PC-9 (cell line): ENCODE measurements at regions of chr22 and their contacts with region 1.

Region 1: GRCh38 chr22:19479357-19480172 is at the start of gene CDC45:
- DNase-seq: peak; percentile 89 to 91
- H3K4me3 ChIP-seq: peak within 1 kb of the TSS; percentile 75
- H3K27ac ChIP-seq: peak within 1 kb of the TSS; percentile 92
- H3K4me1 ChIP-seq: peaks cover 15% of the 10 kb centered on the region
- H3K27me3 ChIP-seq: no peaks in the 10 kb centered on the region
- CTCF ChIP-seq: no peak
- total RNA-seq, gene CDC45: 27.5 and 29.1 TPM in 2 replicates

Region 2: DNA sequence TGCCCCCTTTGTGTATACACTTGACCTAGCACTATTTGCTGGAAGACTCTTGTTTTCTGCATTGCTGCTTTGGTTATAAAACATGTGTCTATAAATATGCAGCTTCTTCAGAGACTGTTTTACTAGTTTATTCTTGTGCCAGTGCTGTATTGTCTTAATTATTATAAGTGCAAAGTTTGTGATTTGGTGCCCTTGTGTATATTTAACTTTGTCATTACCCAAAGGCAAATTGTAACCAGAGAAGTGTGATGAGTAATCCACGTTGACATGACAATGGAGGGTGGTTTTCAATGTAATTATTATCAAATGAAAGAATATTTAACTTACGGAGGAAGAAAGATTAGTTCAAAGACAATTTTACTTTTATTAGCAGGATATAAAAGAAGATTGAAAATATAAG is 468.5 kb before region 1 on chr22:
- CTCF ChIA-PET with region 1: no interaction called
- POLR2A ChIA-PET with region 1: no interaction called
- intact Hi-C with region 1: no loop called
- DNase-seq: no peak
- H3K4me3 ChIP-seq: no peak overlapping the region
- H3K27ac ChIP-seq: no peak overlapping the region
- H3K4me1 ChIP-seq: peaks cover 9% of the 10 kb centered on the region
- H3K27me3 ChIP-seq: no peaks in the 10 kb centered on the region; the same call in 1 of the 2 replicates
- CTCF ChIP-seq: no peak

Region 3: DNA sequence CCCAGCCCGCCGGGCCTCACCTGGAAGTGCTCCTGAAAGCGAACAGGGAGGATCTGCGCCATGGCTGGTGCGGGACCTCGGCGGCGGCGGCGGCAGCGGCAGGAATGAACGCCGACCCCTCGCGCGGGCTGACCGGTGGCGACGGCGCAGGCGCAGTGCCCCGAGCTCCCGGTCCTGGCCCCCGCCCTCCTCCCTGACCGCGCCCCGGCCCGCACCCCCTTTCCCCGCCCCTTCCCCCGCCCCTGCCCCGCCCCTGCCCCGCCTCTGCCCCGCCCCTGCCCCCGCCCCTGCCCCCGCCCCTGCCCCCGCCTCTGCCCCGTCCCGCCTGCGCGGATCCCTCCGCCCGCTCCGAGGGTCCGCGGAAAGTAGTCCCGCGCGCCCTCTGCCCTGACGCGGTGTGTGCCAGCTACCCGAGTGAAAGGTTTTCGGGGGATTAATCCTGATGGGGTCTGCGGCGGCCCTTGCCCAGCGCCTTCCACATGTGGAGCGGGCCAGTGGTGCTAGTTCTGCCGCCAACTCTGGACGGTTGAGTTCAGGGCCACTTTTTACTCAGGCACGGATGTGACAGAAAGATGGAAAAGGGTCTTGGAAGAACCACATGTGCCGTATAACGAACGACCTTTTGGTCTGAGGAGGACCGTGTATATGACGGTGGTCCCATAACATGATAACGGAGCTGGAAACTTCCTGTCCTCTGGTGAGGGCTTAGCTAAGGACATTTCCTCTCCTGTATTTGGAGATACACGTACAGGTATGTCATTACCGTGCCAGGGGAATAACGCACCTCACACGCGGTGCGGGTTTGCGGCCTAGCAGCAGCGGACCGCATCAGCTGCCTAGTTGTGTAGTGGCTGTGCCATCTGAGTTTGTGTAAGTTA is 187.7 kb before region 1 on chr22 and contains the start of gene CLTCL1:
- CTCF ChIA-PET with region 1: no interaction called
- POLR2A ChIA-PET with region 1: no interaction called
- intact Hi-C with region 1: loop called (anchors 10 kb)
- DNase-seq: peak in 1 of 2 experiments; percentile 66
- H3K4me3 ChIP-seq: peak within 1 kb of the TSS; percentile 75
- H3K27ac ChIP-seq: no peak within 1 kb of the TSS
- H3K4me1 ChIP-seq: no peaks in the 10 kb centered on the region
- H3K27me3 ChIP-seq: no peaks in the 10 kb centered on the region
- CTCF ChIP-seq: no peak
- total RNA-seq, gene CLTCL1: 6.6 and 7.2 TPM in 2 replicates

Region 4: DNA sequence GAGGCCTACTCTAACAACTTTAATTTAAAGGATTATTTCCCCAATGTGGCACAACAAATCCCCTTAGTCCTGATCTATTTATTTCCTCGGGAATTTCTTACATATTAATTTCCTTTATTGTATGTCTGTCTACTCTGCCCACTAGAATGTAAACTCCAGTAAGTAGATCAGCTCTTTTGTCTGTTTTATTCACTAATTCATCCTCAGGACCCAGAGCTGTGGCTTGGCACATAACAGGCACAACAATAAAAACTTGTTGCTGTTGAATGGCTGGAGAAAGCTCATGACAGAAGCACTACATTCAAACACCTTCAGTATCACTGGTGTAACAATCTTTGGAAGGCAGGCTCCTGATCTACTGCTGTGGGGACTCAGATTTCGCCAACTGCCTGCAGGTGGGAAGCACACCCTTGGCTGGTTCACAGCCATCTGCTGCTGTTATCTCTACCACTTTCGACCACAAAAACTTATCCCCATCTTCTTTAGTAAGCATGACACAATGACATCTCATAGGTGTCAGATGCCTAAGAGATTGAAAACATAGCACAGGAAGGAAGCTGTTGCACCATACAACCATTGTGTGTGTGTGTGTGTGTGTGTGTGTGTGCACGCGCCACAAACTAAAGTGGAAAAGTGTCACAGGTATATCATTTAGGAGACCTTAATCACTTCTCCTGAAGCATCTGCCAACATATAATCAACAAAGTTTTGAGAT is 59.9 kb before region 1 on chr22:
- CTCF ChIA-PET with region 1: no interaction called
- POLR2A ChIA-PET with region 1: no interaction called
- intact Hi-C with region 1: no loop called
- DNase-seq: no peak
- H3K4me3 ChIP-seq: no peak overlapping the region
- H3K27ac ChIP-seq: no peak overlapping the region
- H3K4me1 ChIP-seq: no peaks in the 10 kb centered on the region
- H3K27me3 ChIP-seq: no peaks in the 10 kb centered on the region
- CTCF ChIP-seq: no peak

Region 5: GRCh38 chr22:19438298-19438697 is 41.3 kb before region 1 on chr22:
- CTCF ChIA-PET with region 1: no interaction called
- POLR2A ChIA-PET with region 1: no interaction called
- intact Hi-C with region 1: no loop called
- DNase-seq: no peak
- H3K4me3 ChIP-seq: no peak overlapping the region
- H3K27ac ChIP-seq: no peak overlapping the region
- H3K4me1 ChIP-seq: no peaks in the 10 kb centered on the region
- H3K27me3 ChIP-seq: no peaks in the 10 kb centered on the region
- CTCF ChIP-seq: no peak

Region 6: GRCh38 chr22:19460036-19460435 is 19.5 kb before region 1 on chr22:
- CTCF ChIA-PET with region 1: no interaction called
- POLR2A ChIA-PET with region 1: no interaction called
- intact Hi-C with region 1: no loop called
- DNase-seq: no peak
- H3K4me3 ChIP-seq: no peak overlapping the region
- H3K27ac ChIP-seq: no peak overlapping the region
- H3K4me1 ChIP-seq: no peaks in the 10 kb centered on the region
- H3K27me3 ChIP-seq: no peaks in the 10 kb centered on the region
- CTCF ChIP-seq: no peak

Region 7: DNA sequence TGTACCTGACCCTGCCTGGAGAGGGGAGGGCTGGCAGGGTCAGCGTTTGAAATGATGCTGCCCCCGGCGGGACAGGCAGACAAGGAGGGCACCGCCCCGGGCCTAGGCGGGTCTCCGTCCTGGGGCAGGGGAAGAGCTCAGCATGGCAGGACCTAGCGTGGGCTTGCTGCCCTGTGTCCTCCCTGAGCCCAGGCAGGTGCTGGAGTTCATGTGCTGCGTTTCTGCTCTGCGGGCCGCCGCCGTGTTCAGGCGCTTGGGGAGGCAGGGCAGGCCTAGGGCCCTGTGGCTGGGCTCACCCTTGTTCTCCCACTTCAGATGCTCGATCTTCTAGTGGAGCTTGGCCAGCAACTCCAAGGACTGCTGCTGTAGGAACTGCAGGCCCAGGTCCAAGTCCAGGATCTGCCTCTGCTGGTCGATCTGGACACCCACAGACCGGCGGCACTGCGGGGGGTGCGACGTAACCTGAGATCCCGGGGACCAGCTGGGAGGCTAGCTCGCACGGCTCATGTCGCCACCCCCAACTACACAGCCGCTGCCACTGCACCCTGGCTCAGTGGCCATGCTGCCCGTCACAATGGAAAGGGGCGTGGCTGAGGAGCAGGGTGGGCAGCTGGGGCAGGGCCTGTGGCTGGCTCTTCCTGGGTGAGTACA is 1112.2 kb after region 1 on chr22:
- CTCF ChIA-PET with region 1: interaction called, 16 read pairs
- POLR2A ChIA-PET with region 1: no interaction called
- intact Hi-C with region 1: no loop called
- DNase-seq: peak in 1 of 2 experiments; percentile 65
- H3K4me3 ChIP-seq: no peak overlapping the region
- H3K27ac ChIP-seq: no peak overlapping the region
- H3K4me1 ChIP-seq: no peaks in the 10 kb centered on the region
- H3K27me3 ChIP-seq: no peaks in the 10 kb centered on the region
- CTCF ChIP-seq: no peak